T-cell (primary cell): ENCODE measurements at regions of chr13 and their contacts with region 1.

Region 1: GRCh38 chr13:51814825-51815650 is 11.1 kb upstream of the DHRS12 start:
- DNase-seq: peak; percentile 29 to 89 (median 61)
- ATAC-seq: peak; percentile 68 to 79 (median 75)
- H3K4me3 ChIP-seq: peak overlapping the region in 1 of 2 donors; percentile 11
- H3K4me3 Mint-ChIP-seq: peak overlapping the region in 2 of 3 donors; percentile 45 to 67
- H3K27ac ChIP-seq: peak overlapping the region; percentile 4
- H3K27ac Mint-ChIP-seq: peak overlapping the region; percentile 94 to 96
- H3K4me1 ChIP-seq: peaks cover 33 to 67% of the 10 kb centered on the region in 2 experiments
- H3K4me1 Mint-ChIP-seq: peaks cover 64 to 81% (median 76%) of the 10 kb centered on the region in 3 donors
- H3K27me3 ChIP-seq: no peaks in the 10 kb centered on the region
- H3K27me3 Mint-ChIP-seq: no peaks in the 10 kb centered on the region

Region 2: DNA sequence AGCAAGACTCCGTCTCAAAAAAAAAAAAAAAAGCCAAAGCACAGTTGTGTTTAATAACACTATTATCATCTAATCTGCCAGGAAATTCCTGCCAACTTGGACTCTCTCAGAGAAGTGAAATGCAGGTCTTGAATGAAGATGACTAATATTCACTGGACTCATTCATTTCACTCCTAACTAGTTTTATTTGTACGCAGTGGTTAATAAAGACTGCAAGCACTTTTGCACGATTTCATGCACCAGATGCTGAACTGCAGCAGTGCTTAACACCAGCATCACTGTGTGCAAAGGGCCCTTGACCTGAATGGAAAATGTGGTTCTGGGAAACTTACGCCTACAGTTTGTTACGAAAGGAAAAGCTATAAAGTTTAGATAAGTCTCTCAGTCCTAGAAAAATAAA is 74.3 kb before region 1 on chr13:
- CTCF ChIA-PET with region 1: no interaction called
- POLR2A ChIA-PET with region 1: no interaction called
- DNase-seq: no peak
- ATAC-seq: no peak
- H3K4me3 ChIP-seq: no peak overlapping the region
- H3K4me3 Mint-ChIP-seq: no peak overlapping the region
- H3K27ac ChIP-seq: no peak overlapping the region
- H3K27ac Mint-ChIP-seq: no peak overlapping the region
- H3K4me1 ChIP-seq: peaks cover 0 to 6% of the 10 kb centered on the region in 2 experiments
- H3K4me1 Mint-ChIP-seq: peaks cover 0 to 8% (median 4%) of the 10 kb centered on the region in 3 donors
- H3K27me3 ChIP-seq: no peaks in the 10 kb centered on the region
- H3K27me3 Mint-ChIP-seq: no peaks in the 10 kb centered on the region

Region 3: GRCh38 chr13:51803422-51804294 is 11.4 kb before region 1 on chr13 and contains the start of gene DHRS12:
- CTCF ChIA-PET with region 1: interaction called, 5 to 23 read pairs
- POLR2A ChIA-PET with region 1: interaction called, 3 read pairs
- DNase-seq: peak; percentile 78 to 94 (median 84)
- ATAC-seq: peak; percentile 76 to 91 (median 86)
- H3K4me3 ChIP-seq: peak within 1 kb of the TSS; percentile 80 to 86
- H3K4me3 Mint-ChIP-seq: peak within 1 kb of the TSS; percentile 88 to 94 (median 91)
- H3K27ac ChIP-seq: peak within 1 kb of the TSS; percentile 100
- H3K27ac Mint-ChIP-seq: peak within 1 kb of the TSS; percentile 99
- H3K4me1 ChIP-seq: peaks cover 18 to 38% of the 10 kb centered on the region in 2 experiments
- H3K4me1 Mint-ChIP-seq: peaks cover 57 to 62% (median 59%) of the 10 kb centered on the region in 3 donors
- H3K27me3 ChIP-seq: no peaks in the 10 kb centered on the region
- H3K27me3 Mint-ChIP-seq: no peaks in the 10 kb centered on the region
- total RNA-seq, gene DHRS12: 18.1 to 27.8 (median 21.7) TPM

Region 4: GRCh38 chr13:51825165-51825592 is 10.1 kb after region 1 on chr13:
- CTCF ChIA-PET with region 1: interaction called, 43 to 59 read pairs
- POLR2A ChIA-PET with region 1: interaction called in 1 of 2 experiments, 5 read pairs
- DNase-seq: peak in 7 of 35 experiments; percentile 32 to 70 (median 39)
- ATAC-seq: peak; percentile 71 to 73 (median 73)
- H3K4me3 ChIP-seq: peak overlapping the region; percentile 64 to 90
- H3K4me3 Mint-ChIP-seq: peak overlapping the region; percentile 84 to 91 (median 91)
- H3K27ac ChIP-seq: peak overlapping the region; percentile 84
- H3K27ac Mint-ChIP-seq: peak overlapping the region; percentile 94 to 96
- H3K4me1 ChIP-seq: peaks cover 64 to 81% of the 10 kb centered on the region in 2 experiments
- H3K4me1 Mint-ChIP-seq: peaks cover 86 to 97% (median 92%) of the 10 kb centered on the region in 3 donors
- H3K27me3 ChIP-seq: no peaks in the 10 kb centered on the region
- H3K27me3 Mint-ChIP-seq: no peaks in the 10 kb centered on the region

Region 5: GRCh38 chr13:51832471-51833152 is 17.6 kb after region 1 on chr13:
- CTCF ChIA-PET with region 1: interaction called, 59 to 112 read pairs
- POLR2A ChIA-PET with region 1: interaction called in 1 of 2 experiments, 3 read pairs
- DNase-seq: peak in 33 of 35 experiments; percentile 31 to 82 (median 57)
- ATAC-seq: peak; percentile 96 to 99 (median 98)
- H3K4me3 ChIP-seq: no peak overlapping the region
- H3K4me3 Mint-ChIP-seq: peak overlapping the region in 1 of 3 donors; percentile 11
- H3K27ac ChIP-seq: no peak overlapping the region
- H3K27ac Mint-ChIP-seq: peak overlapping the region; percentile 37 to 82
- H3K4me1 ChIP-seq: peaks cover 24 to 35% of the 10 kb centered on the region in 2 experiments
- H3K4me1 Mint-ChIP-seq: peaks cover 48 to 53% (median 48%) of the 10 kb centered on the region in 3 donors
- H3K27me3 ChIP-seq: no peaks in the 10 kb centered on the region
- H3K27me3 Mint-ChIP-seq: no peaks in the 10 kb centered on the region

Region 6: DNA sequence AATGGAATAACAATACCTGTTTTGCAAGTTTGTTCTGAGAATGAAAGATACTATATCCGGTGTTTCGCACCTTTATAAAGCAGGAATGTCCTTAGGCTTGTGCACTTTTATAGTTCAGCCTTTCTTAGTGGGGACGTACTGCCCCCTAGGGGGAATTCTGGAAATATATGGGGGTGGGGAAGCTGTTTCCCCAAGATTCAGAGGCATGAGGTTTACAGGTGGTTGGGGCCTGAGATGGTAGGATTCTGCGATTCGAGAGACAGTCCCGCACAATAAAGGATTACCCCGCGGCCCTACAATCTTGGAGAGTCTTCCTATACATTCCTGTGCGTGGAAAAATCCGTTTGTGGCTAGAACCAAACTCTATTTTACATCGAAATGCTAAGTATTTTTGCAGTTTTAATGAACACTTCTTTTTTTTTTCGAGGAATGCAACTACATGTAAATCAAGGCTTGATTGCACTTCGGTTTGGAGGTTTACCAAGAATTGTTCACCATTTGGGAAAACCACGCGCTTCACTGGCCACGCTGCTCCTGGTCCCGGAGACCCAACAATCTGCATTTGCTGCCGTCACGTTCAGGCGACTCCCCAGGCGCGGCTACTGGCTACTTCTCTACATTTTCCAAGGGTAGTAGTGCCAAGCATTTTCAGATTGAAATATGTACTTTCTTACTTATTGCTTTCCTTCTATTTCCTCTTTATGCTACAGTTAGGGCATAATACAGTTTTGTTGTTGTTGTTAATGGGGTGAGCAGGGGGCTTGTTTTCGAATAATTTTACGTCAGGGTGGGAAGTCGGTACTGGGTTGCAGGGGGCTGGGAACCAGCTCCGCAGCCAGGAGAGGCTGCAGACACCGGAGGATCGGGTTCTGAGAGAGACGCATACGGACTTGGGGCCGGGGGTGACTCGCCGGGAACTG is 313.0 kb after region 1 on chr13:
- CTCF ChIA-PET with region 1: interaction called, 4 to 12 read pairs
- POLR2A ChIA-PET with region 1: no interaction called
- DNase-seq: peak in 34 of 35 experiments; percentile 3 to 77 (median 40)
- ATAC-seq: peak; percentile 58 to 77 (median 71)
- H3K4me3 ChIP-seq: peak overlapping the region; percentile 70 to 74
- H3K4me3 Mint-ChIP-seq: peak overlapping the region; percentile 80 to 89 (median 86)
- H3K27ac ChIP-seq: no peak overlapping the region
- H3K27ac Mint-ChIP-seq: peak overlapping the region in 1 of 2 donors; percentile 17
- H3K4me1 ChIP-seq: peaks cover 8 to 18% of the 10 kb centered on the region in 2 experiments
- H3K4me1 Mint-ChIP-seq: peaks cover 15 to 22% (median 20%) of the 10 kb centered on the region in 3 donors
- H3K27me3 ChIP-seq: peaks cover 0 to 19% of the 10 kb centered on the region in 2 experiments
- H3K27me3 Mint-ChIP-seq: peaks cover 4% of the 10 kb centered on the region in 2 donors